Activated CD8-positive, alpha-beta T cell treated with anti-CD3 and anti-CD28 coated beads, Interleukin-2, amount 10 ng/mL, durations not matched to agents 7 days and 5 days (primary cell): ENCODE measurements at regions of chr18 and their contacts with region 1.

Region 1: DNA sequence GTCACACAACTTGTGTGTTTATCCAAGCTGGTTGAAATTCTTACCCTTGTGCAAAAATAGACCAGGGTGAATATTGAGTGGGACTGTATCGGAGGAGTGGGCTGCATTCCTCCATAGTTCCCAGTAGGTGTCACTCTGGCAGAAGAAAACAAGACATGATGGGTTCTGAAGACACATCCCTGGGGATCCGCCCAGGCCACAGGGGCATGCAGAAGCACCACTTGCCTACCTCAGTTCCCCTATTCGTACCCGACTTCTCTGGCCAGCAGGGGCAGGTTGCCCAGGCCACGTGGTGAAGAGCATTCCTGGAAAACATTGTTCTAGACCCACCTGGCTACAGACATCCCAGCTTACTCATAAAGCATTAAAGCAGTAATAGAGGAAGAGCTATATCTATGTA is 168.2 kb downstream of the FAM210A start:
- DNase-seq: peak; percentile 55
- ATAC-seq: peak; percentile 67
- H3K4me3 Mint-ChIP-seq: no peak overlapping the region
- H3K27ac Mint-ChIP-seq: peak overlapping the region; percentile 71
- H3K4me1 Mint-ChIP-seq: peaks cover 36% of the 10 kb centered on the region
- H3K27me3 Mint-ChIP-seq: no peaks in the 10 kb centered on the region

Region 2: GRCh38 chr18:13258921-13259320 is 299.2 kb before region 1 on chr18:
- CTCF ChIA-PET with region 1: no interaction called
- POLR2A ChIA-PET with region 1: no interaction called
- DNase-seq: no peak
- ATAC-seq: no peak
- H3K4me3 Mint-ChIP-seq: no peak overlapping the region
- H3K27ac Mint-ChIP-seq: no peak overlapping the region
- H3K4me1 Mint-ChIP-seq: peaks cover 22% of the 10 kb centered on the region
- H3K27me3 Mint-ChIP-seq: no peaks in the 10 kb centered on the region

Region 3: DNA sequence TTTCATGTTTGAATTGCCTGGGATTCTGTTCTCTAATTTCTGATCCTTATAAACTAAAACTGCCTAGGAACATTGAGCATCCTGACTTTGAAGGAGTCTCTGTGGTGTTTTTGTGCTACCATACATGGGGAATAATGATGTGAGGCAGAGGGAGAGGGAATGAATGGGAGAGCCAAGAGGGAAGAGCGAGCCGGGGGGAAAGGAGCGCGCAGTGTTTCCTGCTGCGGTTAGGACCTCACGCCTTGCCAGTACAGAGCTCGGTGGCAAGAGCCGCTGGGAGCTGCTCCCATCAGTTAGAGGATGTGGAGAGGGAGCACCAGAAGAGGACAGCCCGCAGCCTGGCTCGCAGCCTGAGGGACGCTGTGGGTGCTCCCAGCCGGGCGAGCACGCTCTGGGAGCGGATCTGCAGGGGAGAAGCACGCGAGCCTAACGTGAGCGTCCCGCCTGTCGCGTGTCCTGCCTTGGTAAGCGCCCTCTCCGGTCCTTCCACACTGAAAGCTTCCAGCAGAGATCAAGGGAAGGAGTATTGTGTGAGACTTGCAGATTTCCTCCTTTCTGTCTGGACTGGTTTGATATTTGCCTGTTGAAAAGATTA is 53.6 kb after region 1 on chr18:
- CTCF ChIA-PET with region 1: interaction called, 46 read pairs
- POLR2A ChIA-PET with region 1: interaction called, 10 read pairs
- DNase-seq: peak; percentile 44
- ATAC-seq: peak; percentile 22
- H3K4me3 Mint-ChIP-seq: peak overlapping the region; percentile 84
- H3K27ac Mint-ChIP-seq: peak overlapping the region; percentile 99
- H3K4me1 Mint-ChIP-seq: peaks cover 92% of the 10 kb centered on the region
- H3K27me3 Mint-ChIP-seq: no peaks in the 10 kb centered on the region

Region 4: DNA sequence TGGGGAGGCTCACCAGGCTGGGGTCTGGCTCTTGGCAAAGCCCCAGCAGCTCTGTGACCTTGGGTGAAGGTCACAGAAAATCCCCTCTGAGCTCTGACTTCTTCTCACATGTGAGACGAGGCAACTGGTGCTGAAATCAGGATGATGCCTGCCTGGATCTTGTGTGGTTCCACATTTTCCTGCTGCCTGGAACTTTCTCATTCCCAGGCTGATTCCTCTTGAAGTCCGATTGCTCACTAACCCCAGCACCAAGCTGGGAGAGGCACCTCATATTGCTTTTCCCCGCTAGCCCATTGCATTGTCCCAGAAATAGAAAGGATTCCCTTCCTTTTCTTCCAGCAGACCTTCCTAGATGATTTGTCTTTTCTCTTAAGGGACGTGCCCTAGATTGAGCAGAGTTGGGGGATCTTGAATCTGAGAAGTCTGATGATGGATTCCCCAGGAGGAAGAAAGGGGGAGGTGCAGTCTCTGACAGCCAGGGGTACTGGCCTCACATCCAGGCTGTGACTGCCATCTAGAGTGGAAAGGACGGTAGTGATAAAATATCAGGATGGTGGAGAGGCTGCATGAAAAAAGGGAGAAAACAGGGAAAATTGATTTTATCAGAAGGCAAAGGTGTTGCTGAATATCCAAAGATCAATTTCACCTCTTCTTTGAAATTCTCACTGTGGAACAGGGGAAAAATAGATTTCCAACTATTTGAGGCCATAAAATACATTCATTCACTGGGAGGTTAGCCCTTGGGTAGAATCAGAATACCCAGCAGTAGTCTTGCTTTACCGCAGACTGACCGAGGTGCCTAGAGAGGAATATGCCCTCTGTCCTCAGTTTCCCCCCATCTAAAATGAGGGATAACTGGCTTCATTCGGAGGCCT is 72.0 kb after region 1 on chr18:
- CTCF ChIA-PET with region 1: interaction called, 88 read pairs
- POLR2A ChIA-PET with region 1: interaction called, 3 read pairs
- DNase-seq: peak; percentile 76
- ATAC-seq: peak; percentile 81
- H3K4me3 Mint-ChIP-seq: no peak overlapping the region
- H3K27ac Mint-ChIP-seq: peak overlapping the region; percentile 58
- H3K4me1 Mint-ChIP-seq: peaks cover 45% of the 10 kb centered on the region
- H3K27me3 Mint-ChIP-seq: no peaks in the 10 kb centered on the region